CD8-positive, alpha-beta memory T cell (primary cell): ENCODE measurements at regions of chr13 and their contacts with region 1.

Region 1: GRCh38 chr13:25286969-25287961 is at the start of gene MTMR6:
- DNase-seq: peak; percentile 91 to 96 (median 92)
- H3K4me3 ChIP-seq: peak within 1 kb of the TSS; percentile 96
- H3K4me3 Mint-ChIP-seq: peak within 1 kb of the TSS; percentile 92 to 99 (median 97)
- H3K27ac ChIP-seq: peak within 1 kb of the TSS; percentile 99
- H3K27ac Mint-ChIP-seq: peak within 1 kb of the TSS; percentile 96 to 99 (median 98)
- H3K4me1 ChIP-seq: peaks cover 17% of the 10 kb centered on the region
- H3K4me1 Mint-ChIP-seq: peaks cover 34 to 51% (median 47%) of the 10 kb centered on the region in 3 donors
- H3K27me3 ChIP-seq: no peaks in the 10 kb centered on the region
- H3K27me3 Mint-ChIP-seq: peaks cover 8 to 20% of the 10 kb centered on the region in 2 donors
- total RNA-seq, gene MTMR6: 15.9 to 16.9 TPM

Region 2: DNA sequence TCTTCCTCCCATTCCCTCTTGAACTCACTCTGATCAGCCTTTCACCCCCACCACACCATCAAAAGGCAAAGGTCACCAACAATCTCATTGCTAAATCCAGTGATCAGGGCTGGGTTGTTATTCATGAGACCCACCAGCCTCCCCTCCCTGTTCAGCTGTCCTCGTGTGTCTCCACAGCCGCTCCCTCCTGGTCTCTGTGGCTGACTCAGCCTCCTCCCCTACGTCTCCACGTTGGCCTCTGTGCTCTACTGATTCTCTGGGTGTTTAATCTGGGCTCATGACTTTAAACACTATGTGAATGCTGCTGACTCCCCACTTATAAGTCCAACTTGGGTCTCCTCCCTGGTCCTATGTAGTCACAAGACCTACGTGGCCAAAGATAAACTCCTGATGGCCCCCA is 813.6 kb before region 1 on chr13:
- CTCF ChIA-PET with region 1: no interaction called
- POLR2A ChIA-PET with region 1: no interaction called
- DNase-seq: no peak
- H3K4me3 ChIP-seq: no peak overlapping the region
- H3K4me3 Mint-ChIP-seq: no peak overlapping the region
- H3K27ac ChIP-seq: no peak overlapping the region
- H3K27ac Mint-ChIP-seq: peak overlapping the region in 1 of 8 donors; percentile 51
- H3K4me1 ChIP-seq: no peaks in the 10 kb centered on the region
- H3K4me1 Mint-ChIP-seq: peaks cover 0 to 2% (median 0%) of the 10 kb centered on the region in 3 donors
- H3K27me3 ChIP-seq: no peaks in the 10 kb centered on the region
- H3K27me3 Mint-ChIP-seq: no peaks in the 10 kb centered on the region

Region 3: DNA sequence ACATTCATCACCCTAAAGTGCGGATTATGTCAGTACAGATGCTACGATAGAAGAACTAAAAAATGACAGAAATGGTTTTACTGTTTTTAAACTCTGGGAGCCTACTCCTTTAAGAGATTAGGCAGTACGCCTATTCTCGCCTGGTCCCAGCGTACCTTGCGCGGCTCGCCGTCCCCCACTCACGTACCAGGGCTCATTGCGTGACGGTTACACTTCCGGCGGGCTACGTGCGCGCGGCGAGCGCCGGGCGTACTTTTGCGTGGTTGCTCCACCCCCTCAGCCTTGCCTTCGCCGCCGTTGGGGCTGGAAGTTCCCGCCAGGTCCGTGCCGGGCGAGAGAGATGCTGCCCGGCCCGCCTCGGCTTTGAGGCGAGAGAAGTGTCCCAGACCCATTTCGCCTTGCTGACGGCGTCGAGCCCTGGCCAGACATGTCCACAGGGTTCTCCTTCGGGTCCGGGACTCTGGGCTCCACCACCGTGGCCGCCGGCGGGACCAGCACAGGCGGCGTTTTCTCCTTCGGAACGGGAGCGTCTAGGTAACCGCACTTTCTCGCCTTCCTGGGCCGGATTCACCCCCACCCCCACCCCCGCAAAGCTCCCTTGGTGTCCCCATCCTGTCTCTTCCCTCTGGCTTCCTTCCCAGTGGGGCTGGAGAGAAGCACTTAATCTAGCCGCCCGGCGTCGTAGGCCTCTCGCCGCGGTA is 14.2 kb after region 1 on chr13 and contains the start of gene NUP58:
- CTCF ChIA-PET with region 1: interaction called, 49 read pairs
- POLR2A ChIA-PET with region 1: interaction called, 12 read pairs
- DNase-seq: peak; percentile 88 to 95 (median 91)
- H3K4me3 ChIP-seq: peak within 1 kb of the TSS; percentile 93
- H3K4me3 Mint-ChIP-seq: peak within 1 kb of the TSS; percentile 82 to 98 (median 93)
- H3K27ac ChIP-seq: peak within 1 kb of the TSS; percentile 90
- H3K27ac Mint-ChIP-seq: peak within 1 kb of the TSS; percentile 84 to 98 (median 96)
- H3K4me1 ChIP-seq: peaks cover 21% of the 10 kb centered on the region
- H3K4me1 Mint-ChIP-seq: peaks cover 33 to 53% (median 43%) of the 10 kb centered on the region in 3 donors
- H3K27me3 ChIP-seq: peaks cover 10% of the 10 kb centered on the region
- H3K27me3 Mint-ChIP-seq: peaks cover 7 to 29% of the 10 kb centered on the region in 2 donors
- total RNA-seq, gene NUP58: 123 to 124 TPM